CD4-positive, alpha-beta memory T cell (primary cell): ENCODE measurements at regions of chr12 and their contacts with region 1.

Region 1: DNA sequence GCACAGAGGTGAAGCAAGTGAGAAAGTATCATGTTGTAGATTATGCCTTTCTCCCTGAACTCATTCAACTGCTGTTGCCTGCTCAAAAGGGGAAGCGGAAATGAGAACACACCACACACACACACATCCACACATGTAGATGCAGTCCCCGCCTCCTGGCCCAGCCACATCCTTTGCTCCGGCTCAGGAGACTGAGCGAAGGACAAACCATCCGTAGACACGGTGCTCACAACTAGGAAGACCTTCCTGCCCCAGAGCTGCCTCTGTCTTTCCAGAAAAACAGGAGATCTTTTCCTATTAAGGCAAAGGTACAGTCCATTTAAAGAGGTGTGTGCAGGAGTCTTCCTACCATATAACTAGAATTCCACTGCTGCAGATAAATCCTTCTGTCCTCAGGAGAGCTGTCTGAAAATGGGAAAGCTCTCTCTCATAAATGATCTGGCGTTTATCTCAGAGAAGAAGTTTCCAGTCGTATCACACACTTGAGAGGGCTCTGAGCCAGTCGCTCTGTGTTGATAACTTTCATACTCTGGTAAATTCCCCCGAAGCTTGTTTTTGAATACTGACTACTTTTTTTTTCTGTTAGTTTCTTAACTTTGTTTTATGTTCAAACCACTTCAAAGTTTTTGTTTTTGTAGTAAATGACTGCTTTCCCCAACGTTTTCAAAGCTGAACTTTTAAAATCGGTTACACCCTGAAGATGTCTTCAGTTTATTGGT is at the start of gene TESPA1:
- DNase-seq: peak; percentile 86 to 94 (median 90)
- H3K4me3 ChIP-seq: peak within 1 kb of the TSS; percentile 66 to 86
- H3K4me3 Mint-ChIP-seq: peak within 1 kb of the TSS; percentile 89 to 99 (median 95)
- H3K27ac ChIP-seq: peak within 1 kb of the TSS; percentile 92
- H3K27ac Mint-ChIP-seq: peak within 1 kb of the TSS; percentile 97 to 100 (median 98)
- H3K4me1 ChIP-seq: peaks cover 71% of the 10 kb centered on the region
- H3K4me1 Mint-ChIP-seq: peaks cover 53 to 97% (median 64%) of the 10 kb centered on the region in 4 donors
- H3K27me3 ChIP-seq: no peaks in the 10 kb centered on the region
- H3K27me3 Mint-ChIP-seq: no peaks in the 10 kb centered on the region
- total RNA-seq, gene TESPA1: 269 to 287 TPM

Region 2: GRCh38 chr12:54560374-54560858 is 424.4 kb before region 1 on chr12:
- CTCF ChIA-PET with region 1: no interaction called
- POLR2A ChIA-PET with region 1: no interaction called
- intact Hi-C with region 1: no loop called
- DNase-seq: peak; percentile 82 to 93 (median 86)
- H3K4me3 ChIP-seq: peak overlapping the region; percentile 52 to 76
- H3K4me3 Mint-ChIP-seq: peak overlapping the region; percentile 81 to 99 (median 94)
- H3K27ac ChIP-seq: peak overlapping the region; percentile 53
- H3K27ac Mint-ChIP-seq: peak overlapping the region; percentile 27 to 99 (median 96)
- H3K4me1 ChIP-seq: peaks cover 18% of the 10 kb centered on the region
- H3K4me1 Mint-ChIP-seq: peaks cover 10 to 24% (median 16%) of the 10 kb centered on the region in 4 donors
- H3K27me3 ChIP-seq: no peaks in the 10 kb centered on the region
- H3K27me3 Mint-ChIP-seq: no peaks in the 10 kb centered on the region

Region 3: GRCh38 chr12:54967461-54967860 is 17.4 kb before region 1 on chr12:
- CTCF ChIA-PET with region 1: interaction called, 31 read pairs
- POLR2A ChIA-PET with region 1: interaction called, 141 read pairs
- intact Hi-C with region 1: loop called (anchors 1 kb)
- DNase-seq: peak in 1 of 5 donors; percentile 59
- H3K4me3 ChIP-seq: no peak overlapping the region
- H3K4me3 Mint-ChIP-seq: peak overlapping the region in 7 of 8 donors; percentile 56 to 84 (median 80)
- H3K27ac ChIP-seq: peak overlapping the region; percentile 46
- H3K27ac Mint-ChIP-seq: peak overlapping the region; percentile 58 to 94 (median 87)
- H3K4me1 ChIP-seq: peaks cover 74% of the 10 kb centered on the region
- H3K4me1 Mint-ChIP-seq: peaks cover 59 to 91% (median 79%) of the 10 kb centered on the region in 4 donors
- H3K27me3 ChIP-seq: no peaks in the 10 kb centered on the region
- H3K27me3 Mint-ChIP-seq: no peaks in the 10 kb centered on the region